KBM-7 (cell line): ENCODE measurements at regions of chr17 and their contacts with region 1.

Region 1: GRCh38 chr17:44628243-44629188 is 27.8 kb upstream of the MEIOC start:
- DNase-seq: no peak

Region 2: DNA sequence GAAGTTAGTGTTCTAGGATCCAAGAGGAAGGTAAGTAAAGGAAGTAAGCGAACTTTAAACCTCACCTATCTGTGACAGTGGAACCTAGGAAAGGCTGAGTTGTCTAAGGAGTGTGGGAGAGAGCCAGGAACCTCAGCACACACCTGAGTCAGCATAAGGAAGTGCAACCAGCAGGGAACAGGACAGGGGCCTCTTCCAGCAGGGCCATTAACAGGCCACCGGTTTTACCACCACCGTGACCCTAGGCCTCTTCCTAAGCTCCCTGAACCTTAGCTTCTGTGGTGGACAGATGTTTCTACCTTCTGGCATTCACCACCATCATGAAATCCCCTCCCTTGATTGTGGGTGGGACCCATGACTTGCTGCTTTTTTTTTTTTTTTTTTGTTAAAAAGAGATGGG is 98.7 kb before region 1 on chr17:
- in situ Hi-C with region 1: no loop called
- DNase-seq: no peak

Region 3: GRCh38 chr17:44543213-44543904 is 85.2 kb before region 1 on chr17:
- in situ Hi-C with region 1: loop called (anchors 10 kb)
- DNase-seq: no peak